ENCODE measurements at regions of chr9 and their contacts with region 1.

Region 1: DNA sequence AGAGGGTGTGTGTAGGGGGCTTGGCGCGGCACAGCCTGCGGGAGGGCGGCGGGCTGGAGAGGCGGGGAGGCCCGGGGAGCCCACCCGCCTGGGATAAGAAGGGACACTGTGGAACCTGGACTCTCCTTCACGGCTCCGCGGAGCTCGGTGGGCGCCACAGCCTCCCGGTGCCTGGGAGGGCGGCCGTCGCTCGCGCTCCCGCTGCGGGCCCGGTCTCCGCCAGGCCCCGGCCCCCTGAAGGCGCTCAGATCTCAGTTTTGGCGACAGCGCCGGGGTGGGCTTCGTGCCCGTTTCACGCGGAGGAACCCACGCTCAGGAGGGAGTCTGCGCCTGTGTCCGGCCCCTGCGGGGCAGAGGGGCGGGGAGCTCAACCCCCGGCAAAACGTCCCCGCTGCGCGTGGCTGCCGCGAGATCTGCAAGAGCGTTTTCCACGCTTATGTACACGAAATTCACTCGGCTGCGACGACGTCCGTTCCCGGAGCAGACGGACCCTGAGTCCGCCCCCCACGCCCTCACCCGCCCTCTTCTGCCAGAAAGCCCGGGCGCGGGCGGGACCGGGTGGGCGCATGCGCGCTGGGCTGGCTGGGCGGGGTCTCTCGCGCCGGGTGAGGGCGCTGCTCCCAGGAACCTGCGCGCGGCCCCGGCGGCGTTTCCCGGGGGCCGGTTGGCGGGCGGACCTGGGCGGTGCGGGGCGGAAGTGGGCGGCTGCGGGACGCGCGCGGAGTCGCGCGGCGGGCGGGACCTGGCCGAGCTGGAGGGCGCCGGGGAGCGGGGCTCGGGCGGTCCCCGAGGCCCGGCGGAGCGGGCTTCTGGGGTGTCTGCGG is at the start of gene NELFB:
- DNase-seq: peak; percentile 98
- total RNA-seq, gene NELFB: 37.2 TPM

Region 2: DNA sequence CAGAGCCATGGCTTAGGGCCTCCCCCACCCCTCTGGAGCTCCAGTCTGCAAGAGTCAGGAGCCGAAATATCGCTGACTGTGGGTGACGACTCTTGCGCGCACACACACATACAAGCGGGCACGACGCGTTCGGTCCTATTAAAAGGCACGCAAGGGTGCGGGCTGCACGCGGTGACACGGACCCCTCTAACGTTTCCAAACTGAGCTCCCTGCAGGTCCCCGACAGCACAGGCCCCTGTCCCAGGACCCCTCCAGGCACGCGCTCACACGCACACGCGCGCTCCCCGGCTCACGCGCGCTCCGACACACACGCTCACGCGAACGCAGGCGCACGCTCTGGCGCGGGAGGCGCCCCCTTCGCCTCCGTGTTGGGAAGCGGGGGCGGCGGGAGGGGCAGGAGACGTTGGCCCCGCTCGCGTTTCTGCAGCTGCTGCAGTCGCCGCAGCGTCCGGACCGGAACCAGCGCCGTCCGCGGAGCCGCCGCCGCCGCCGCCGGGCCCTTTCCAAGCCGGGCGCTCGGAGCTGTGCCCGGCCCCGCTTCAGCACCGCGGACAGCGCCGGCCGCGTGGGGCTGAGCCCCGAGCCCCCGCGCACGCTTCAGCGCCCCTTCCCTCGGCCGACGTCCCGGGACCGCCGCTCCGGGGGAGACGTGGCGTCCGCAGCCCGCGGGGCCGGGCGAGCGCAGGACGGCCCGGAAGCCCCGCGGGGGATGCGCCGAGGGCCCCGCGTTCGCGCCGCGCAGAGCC is 115.9 kb before region 1 on chr9 and contains the start of gene GRIN1:
- intact Hi-C with region 1: no loop called
- DNase-seq: no peak
- total RNA-seq, gene GRIN1: not detected

Region 3: DNA sequence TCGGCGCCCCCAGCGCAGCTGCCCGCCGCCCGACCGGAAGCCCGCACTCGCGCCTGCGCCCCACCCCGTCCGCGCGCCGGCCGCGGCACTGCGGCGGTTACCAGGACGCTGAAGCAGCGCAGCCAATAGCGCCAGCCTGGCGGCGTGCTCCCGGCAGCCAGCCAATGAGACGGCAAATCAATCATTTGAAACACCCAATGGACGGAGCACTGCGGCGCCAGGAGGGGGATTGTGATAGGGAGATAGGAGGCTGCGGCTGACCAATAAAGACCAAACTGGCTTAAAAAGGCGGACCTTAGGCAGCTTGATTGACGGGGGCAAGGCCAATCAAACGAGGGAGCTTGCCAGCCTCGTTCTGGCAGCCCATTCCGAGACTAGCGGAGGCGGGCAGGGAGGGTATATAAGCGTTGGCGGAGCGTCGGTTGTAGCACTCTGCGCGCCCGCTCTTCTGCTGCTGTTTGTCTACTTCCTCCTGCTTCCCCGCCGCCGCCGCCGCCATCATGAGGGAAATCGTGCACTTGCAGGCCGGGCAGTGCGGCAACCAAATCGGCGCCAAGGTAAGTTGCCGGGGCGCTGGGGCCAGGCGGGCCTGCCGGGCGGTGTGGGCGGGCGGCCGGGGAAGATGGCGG is 13.9 kb before region 1 on chr9 and contains the start of gene TUBB4B:
- intact Hi-C with region 1: loop called (anchors 2 kb)
- DNase-seq: peak; percentile 99
- total RNA-seq, gene TUBB4B: 304 TPM